IMR-90 (cell line): ENCODE measurements at regions of chr17 and their contacts with region 1.

Region 1: GRCh38 chr17:1716076-1716995 is 6.2 kb upstream of the TLCD2 start:
- DNase-seq: peak; percentile 100
- ATAC-seq: peak; percentile 65
- H3K4me3 ChIP-seq: peak overlapping the region; percentile 78
- H3K27ac ChIP-seq: peak overlapping the region; percentile 98
- H3K4me1 ChIP-seq: peaks cover 21% of the 10 kb centered on the region
- H3K27me3 ChIP-seq: no peaks in the 10 kb centered on the region
- CTCF ChIP-seq: peak; percentile 39
- POLR2A ChIP-seq: peak; percentile 99
- RAD21 ChIP-seq: peak; percentile 40

Region 2: DNA sequence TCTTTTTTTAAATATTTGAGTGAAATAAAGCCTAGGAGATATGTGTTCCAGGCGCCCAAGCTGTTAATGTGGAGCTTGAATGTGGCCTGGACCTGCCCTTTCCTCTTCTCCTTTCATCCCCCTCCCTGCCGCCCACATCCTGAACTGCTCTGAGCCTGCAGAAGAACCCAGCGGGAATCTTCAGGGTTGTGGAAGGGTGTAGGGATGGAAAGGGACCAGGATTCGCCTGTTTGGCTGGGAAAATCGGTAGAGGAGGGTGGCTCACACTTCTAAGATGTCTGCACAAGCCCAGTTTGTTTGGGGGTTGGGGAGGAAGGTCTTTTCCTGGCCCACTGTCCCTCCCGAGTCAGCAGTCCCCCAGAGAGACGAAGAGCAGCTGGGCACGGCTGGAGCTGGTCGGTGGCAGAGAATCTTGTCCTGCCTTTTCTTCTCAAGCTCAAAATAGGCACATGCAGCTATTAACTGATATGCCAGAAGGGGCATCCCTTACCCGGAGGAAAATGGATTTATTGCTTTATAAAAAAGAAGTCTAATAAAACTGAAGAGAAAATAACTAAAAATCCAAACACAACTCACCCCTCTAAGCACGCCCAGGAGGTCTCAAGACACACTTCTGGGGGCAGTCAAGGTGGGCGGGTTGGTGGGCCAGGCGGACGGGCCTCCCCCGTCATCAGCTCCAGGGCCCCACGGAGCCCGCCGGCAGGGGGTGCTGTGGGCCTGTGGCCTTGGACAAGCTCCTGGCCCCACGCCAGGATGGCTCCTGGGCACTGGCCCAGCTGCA is 142.2 kb before region 1 on chr17:
- CTCF ChIA-PET with region 1: interaction called, 4 read pairs
- POLR2A ChIA-PET with region 1: interaction called, 18 read pairs
- dilution Hi-C with region 1: no loop called
- in situ Hi-C with region 1: no loop called
- intact Hi-C with region 1: no loop called
- DNase-seq: peak; percentile 66
- ATAC-seq: peak; percentile 58
- H3K4me3 ChIP-seq: no peak overlapping the region
- H3K27ac ChIP-seq: no peak overlapping the region; the same call in 1 of the 2 replicates
- H3K4me1 ChIP-seq: peaks cover 15% of the 10 kb centered on the region
- H3K27me3 ChIP-seq: no peaks in the 10 kb centered on the region
- CTCF ChIP-seq: peak; percentile 96
- POLR2A ChIP-seq: no peak
- RAD21 ChIP-seq: peak; percentile 91

Region 3: GRCh38 chr17:1606352-1607033 is 109.8 kb before region 1 on chr17:
- CTCF ChIA-PET with region 1: no interaction called
- POLR2A ChIA-PET with region 1: no interaction called
- dilution Hi-C with region 1: no loop called
- in situ Hi-C with region 1: no loop called
- intact Hi-C with region 1: no loop called
- DNase-seq: no peak
- ATAC-seq: no peak
- H3K4me3 ChIP-seq: no peak overlapping the region
- H3K27ac ChIP-seq: no peak overlapping the region
- H3K4me1 ChIP-seq: peaks cover 6% of the 10 kb centered on the region; the same call in 1 of the 2 replicates
- H3K27me3 ChIP-seq: no peaks in the 10 kb centered on the region
- CTCF ChIP-seq: no peak
- POLR2A ChIP-seq: no peak
- RAD21 ChIP-seq: no peak

Region 4: DNA sequence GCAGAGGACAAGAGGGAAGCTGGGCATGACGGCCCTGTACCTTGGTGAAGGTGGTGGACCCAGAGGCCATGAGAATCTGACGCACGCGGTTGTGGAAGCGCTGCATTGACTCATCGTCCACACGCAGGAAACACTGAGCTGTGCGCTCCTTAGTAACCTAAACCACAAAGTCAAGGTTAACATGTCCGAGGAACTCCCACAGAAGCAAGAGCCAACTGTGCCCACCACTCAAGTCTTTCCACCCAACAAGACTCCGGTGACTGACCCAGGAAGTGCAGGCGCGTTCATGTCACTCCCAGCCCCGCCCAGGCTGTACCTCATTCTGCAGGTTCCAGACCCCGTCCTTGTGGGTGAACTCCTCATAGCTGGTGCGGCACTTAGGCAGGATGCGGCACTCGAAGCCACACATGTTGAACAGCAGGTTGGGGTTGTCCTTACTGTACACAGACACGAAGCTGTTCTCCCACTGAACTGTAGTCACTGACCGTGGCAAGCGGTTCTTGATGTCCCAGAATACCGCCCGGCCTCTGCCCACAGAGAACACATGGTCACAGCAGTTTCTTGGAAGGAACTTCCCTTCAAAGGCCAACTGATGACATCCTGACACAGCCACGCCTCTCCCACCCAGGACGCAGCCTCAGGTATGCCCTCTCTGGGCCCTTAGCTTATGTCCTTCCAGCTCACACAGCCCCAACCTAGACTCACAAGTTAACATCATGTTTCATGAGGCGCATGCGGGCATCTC is 43.1 kb before region 1 on chr17:
- CTCF ChIA-PET with region 1: interaction called, 5 read pairs
- POLR2A ChIA-PET with region 1: interaction called, 5 read pairs
- dilution Hi-C with region 1: no loop called
- in situ Hi-C with region 1: no loop called
- intact Hi-C with region 1: loop called (anchors 1 kb)
- DNase-seq: no peak
- ATAC-seq: no peak
- H3K4me3 ChIP-seq: no peak overlapping the region
- H3K27ac ChIP-seq: no peak overlapping the region; the same call in 1 of the 2 replicates
- H3K4me1 ChIP-seq: peaks cover 3% of the 10 kb centered on the region; the same call in 1 of the 2 replicates
- H3K27me3 ChIP-seq: no peaks in the 10 kb centered on the region
- CTCF ChIP-seq: no peak
- POLR2A ChIP-seq: no peak
- RAD21 ChIP-seq: no peak

Region 5: DNA sequence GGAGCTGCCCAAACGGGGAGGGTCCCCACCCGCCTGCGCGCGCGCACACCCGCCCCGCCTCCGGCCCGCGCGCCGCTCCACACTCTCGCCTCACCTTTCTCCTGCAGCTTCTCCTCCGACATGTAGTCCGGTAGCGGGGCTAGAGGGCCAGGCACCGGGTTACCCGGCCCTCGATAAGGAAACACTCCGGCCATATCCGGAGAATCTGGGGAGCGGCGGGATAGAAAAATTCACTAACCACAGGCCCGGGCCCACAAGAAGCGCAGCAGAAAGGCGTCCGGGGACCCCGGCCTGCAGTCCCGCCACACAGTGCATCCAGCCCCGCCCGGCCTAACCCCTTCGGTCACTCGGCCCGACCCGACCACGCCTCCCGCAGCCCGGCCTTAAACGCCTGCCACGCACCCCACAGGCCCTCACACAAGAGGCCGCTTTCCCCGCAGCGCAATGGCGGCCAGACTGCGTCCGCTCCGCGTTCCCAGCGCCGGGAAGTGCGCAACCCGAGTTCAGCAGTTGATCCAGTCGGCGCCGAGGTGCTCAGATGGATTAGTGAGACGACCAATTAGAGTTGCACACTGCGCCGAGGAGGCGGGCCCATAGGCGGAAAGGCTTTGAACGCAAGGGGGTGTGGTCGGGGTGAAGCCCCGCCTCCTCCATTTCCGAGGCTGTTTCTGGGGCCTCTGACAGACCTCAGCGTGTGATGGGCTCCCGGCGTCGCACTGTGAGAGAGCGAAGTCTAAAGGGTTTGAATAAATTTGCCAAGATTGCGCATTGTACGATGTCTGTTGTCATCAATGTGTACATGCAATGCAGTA is 31.8 kb before region 1 on chr17 and contains the start of gene PRPF8:
- CTCF ChIA-PET with region 1: no interaction called
- POLR2A ChIA-PET with region 1: interaction called, 4 read pairs
- dilution Hi-C with region 1: no loop called
- in situ Hi-C with region 1: no loop called
- intact Hi-C with region 1: loop called (anchors 2 kb)
- DNase-seq: peak; percentile 96
- ATAC-seq: peak; percentile 99
- H3K4me3 ChIP-seq: peak within 1 kb of the TSS; percentile 61
- H3K27ac ChIP-seq: peak within 1 kb of the TSS; percentile 85
- H3K4me1 ChIP-seq: peaks cover 3% of the 10 kb centered on the region
- H3K27me3 ChIP-seq: no peaks in the 10 kb centered on the region
- CTCF ChIP-seq: no peak
- POLR2A ChIP-seq: peak; percentile 82
- RAD21 ChIP-seq: no peak
- total RNA-seq, gene PRPF8: 113 and 141 TPM in 2 replicates

Region 6: DNA sequence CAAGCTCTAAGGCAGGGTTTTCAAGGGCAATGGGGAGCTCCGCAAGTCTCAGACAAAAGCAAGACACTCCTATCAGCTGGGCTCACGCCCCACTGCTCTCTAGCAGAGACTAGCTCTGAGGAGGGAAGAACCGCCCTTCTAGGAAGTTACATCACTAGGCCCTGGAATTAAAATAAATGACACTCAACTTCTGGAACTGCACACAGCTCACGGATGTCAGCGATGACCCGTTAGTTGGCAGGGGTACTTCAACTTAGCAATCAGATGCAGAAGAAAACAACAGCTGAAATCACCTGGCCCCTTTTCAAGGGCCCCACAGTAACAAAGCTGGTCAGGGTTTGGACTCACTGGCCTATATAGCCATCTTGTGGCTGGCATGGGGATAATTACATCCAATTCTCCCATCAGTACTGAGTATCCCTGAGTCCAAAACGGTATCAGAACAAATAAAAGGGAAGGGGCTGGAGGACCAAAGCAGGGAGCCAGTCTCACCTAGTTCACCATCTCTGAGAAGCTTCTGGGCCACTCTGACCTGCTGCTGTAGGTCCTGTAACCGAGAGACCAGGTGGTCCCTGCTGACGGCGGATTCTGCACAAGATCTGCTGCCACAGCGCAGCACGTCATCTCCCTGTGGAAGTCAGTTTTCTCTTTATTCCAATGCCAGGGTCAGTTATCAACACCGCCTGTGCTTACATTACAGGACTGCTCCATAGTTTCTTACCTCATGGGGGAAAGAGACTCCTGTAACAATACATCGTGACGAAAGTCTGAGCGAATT is 67.7 kb after region 1 on chr17:
- CTCF ChIA-PET with region 1: interaction called, 31 read pairs
- POLR2A ChIA-PET with region 1: interaction called, 11 read pairs
- dilution Hi-C with region 1: no loop called
- in situ Hi-C with region 1: loop called (anchors 5 kb)
- intact Hi-C with region 1: loop called (anchors 1 kb)
- DNase-seq: peak; percentile 86
- ATAC-seq: peak; percentile 63
- H3K4me3 ChIP-seq: no peak overlapping the region
- H3K27ac ChIP-seq: peak overlapping the region; percentile 11; the same call in 1 of the 2 replicates
- H3K4me1 ChIP-seq: peaks cover 28% of the 10 kb centered on the region
- H3K27me3 ChIP-seq: no peaks in the 10 kb centered on the region
- CTCF ChIP-seq: peak; percentile 80
- POLR2A ChIP-seq: no peak
- RAD21 ChIP-seq: peak; percentile 82

Region 7: GRCh38 chr17:1813088-1813487 is 96.8 kb after region 1 on chr17:
- CTCF ChIA-PET with region 1: no interaction called
- POLR2A ChIA-PET with region 1: no interaction called
- dilution Hi-C with region 1: no loop called
- in situ Hi-C with region 1: no loop called
- intact Hi-C with region 1: no loop called
- DNase-seq: peak; percentile 12
- ATAC-seq: no peak
- H3K4me3 ChIP-seq: no peak overlapping the region
- H3K27ac ChIP-seq: no peak overlapping the region
- H3K4me1 ChIP-seq: 0 out of 2 replicates have a peak, but pooled peaks cover 2% of the 10 kb centered on the region
- H3K27me3 ChIP-seq: no peaks in the 10 kb centered on the region
- CTCF ChIP-seq: no peak
- POLR2A ChIP-seq: no peak
- RAD21 ChIP-seq: no peak

Region 8: GRCh38 chr17:1829592-1830257 is 113.4 kb after region 1 on chr17 and contains the starts of genes RPA1 and SMYD4:
- CTCF ChIA-PET with region 1: no interaction called
- POLR2A ChIA-PET with region 1: interaction called, 4 read pairs
- dilution Hi-C with region 1: no loop called
- in situ Hi-C with region 1: no loop called
- intact Hi-C with region 1: loop called (anchors 2 kb)
- DNase-seq: peak; percentile 79
- ATAC-seq: peak; percentile 100
- H3K4me3 ChIP-seq: peak within 1 kb of the TSS; percentile 100
- H3K27ac ChIP-seq: peak within 1 kb of the TSS; percentile 80
- H3K4me1 ChIP-seq: peaks cover 5% of the 10 kb centered on the region
- H3K27me3 ChIP-seq: no peaks in the 10 kb centered on the region
- CTCF ChIP-seq: no peak
- POLR2A ChIP-seq: peak; percentile 37; the same call in 1 of the 2 replicates
- RAD21 ChIP-seq: no peak
- total RNA-seq, gene RPA1: 32.8 and 38.4 TPM in 2 replicates
- total RNA-seq, gene SMYD4: 6.7 and 7.2 TPM in 2 replicates

Region 9: GRCh38 chr17:2041561-2042366 is 325.4 kb after region 1 on chr17 and contains the start of gene OVCA2:
- CTCF ChIA-PET with region 1: no interaction called
- POLR2A ChIA-PET with region 1: no interaction called
- dilution Hi-C with region 1: no loop called
- in situ Hi-C with region 1: loop called (anchors 25 kb)
- intact Hi-C with region 1: loop called (anchors 5 kb)
- DNase-seq: peak; percentile 92
- ATAC-seq: peak; percentile 85
- H3K4me3 ChIP-seq: peak within 1 kb of the TSS; percentile 74
- H3K27ac ChIP-seq: peak within 1 kb of the TSS; percentile 94
- H3K4me1 ChIP-seq: peaks cover 22% of the 10 kb centered on the region
- H3K27me3 ChIP-seq: no peaks in the 10 kb centered on the region
- CTCF ChIP-seq: peak; percentile 71
- POLR2A ChIP-seq: peak; percentile 86
- RAD21 ChIP-seq: peak; percentile 58
- total RNA-seq, gene OVCA2: 38.7 and 42.2 TPM in 2 replicates